Activated CD8-positive, alpha-beta T cell treated with anti-CD3 and anti-CD28 coated beads, Interleukin-2, amount 10 ng/mL, durations not matched to agents 7 days and 5 days (primary cell): ENCODE measurements at regions of chr10 and their contacts with region 1.

Region 1: GRCh38 chr10:43453266-43453831 is 16.4 kb downstream of the ZNF487 start:
- DNase-seq: peak; percentile 28
- ATAC-seq: no peak
- H3K4me3 Mint-ChIP-seq: peak overlapping the region; percentile 65
- H3K27ac Mint-ChIP-seq: peak overlapping the region; percentile 98
- H3K4me1 Mint-ChIP-seq: peaks cover 50% of the 10 kb centered on the region
- H3K27me3 Mint-ChIP-seq: no peaks in the 10 kb centered on the region

Region 2: DNA sequence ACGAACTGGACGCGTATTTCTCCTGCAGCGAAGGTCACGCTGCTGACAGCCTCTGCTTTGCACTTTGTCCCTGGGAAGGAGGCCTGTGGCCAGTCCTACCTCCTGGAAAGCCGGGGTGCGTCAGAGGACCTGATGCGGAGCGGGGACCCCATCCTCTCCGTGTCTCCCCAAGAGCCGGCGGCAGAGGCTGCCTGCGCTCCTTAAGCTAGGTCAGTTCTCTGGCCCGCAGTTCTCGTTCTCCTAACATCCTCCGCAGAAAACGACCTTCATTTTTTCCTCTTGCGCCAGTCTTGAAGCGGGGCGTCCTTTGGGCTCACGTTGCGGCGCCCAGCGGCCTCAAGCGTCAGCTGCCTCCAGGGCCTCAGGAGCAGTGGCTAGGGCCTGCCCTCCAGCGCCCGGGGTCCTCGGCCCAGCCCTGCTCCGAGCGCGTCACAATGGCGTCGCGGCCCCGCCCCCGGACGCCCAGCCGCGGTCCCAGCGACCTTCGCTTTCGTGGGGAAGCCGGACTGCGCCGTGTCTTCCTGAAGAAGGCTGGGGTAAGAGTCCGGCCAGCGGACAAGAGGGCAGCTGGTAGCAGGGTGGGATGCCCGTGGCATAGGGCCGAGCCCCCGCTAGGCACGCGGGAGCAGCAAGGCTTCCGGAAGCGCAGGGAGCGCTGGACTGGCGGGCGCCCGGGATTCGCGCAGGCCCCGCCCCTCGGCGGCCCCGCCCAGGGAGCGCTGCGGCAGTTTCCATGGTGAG is 16.8 kb before region 1 on chr10 and contains the start of gene ZNF487:
- CTCF ChIA-PET with region 1: no interaction called
- POLR2A ChIA-PET with region 1: interaction called, 22 read pairs
- DNase-seq: peak; percentile 92
- ATAC-seq: peak; percentile 95
- H3K4me3 Mint-ChIP-seq: peak within 1 kb of the TSS; percentile 96
- H3K27ac Mint-ChIP-seq: peak within 1 kb of the TSS; percentile 99
- H3K4me1 Mint-ChIP-seq: peaks cover 23% of the 10 kb centered on the region
- H3K27me3 Mint-ChIP-seq: no peaks in the 10 kb centered on the region
- total RNA-seq, gene ZNF487: 4.8 to 5.2 TPM